Mammary epithelial cell (primary cell): ENCODE measurements at regions of chr9 and their contacts with region 1.

Region 1: GRCh38 chr9:132575005-132575609 is 7.3 kb upstream of the BARHL1 start:
- DNase-seq: peak; percentile 57
- H3K4me3 ChIP-seq: no peak overlapping the region
- H3K27ac ChIP-seq: no peak overlapping the region
- H3K4me1 ChIP-seq: no peaks in the 10 kb centered on the region
- H3K27me3 ChIP-seq: peaks cover 19% of the 10 kb centered on the region
- CTCF ChIP-seq: peak; percentile 65 to 83

Region 2: DNA sequence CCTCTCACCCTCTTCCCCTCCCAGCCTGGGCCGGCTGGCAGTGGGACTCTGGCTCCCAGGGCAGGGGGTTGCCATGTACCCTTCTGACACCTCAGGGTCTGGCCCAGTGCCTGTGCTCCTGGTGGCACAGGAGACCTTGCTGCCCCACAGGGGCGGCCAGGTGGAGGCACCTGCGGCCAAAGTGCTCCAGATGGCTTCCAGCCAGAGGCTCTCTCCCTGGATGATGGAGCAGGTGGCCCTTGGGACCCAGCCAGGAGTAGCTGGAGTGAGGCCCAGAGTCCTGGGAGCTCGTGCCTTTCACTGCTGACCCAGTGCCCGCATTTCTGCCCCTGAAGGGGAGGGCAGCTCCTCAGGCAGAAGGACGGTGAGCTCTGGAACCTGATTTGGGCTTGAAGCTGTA is 326.0 kb before region 1 on chr9:
- CTCF ChIA-PET with region 1: no interaction called
- dilution Hi-C with region 1: no loop called
- in situ Hi-C with region 1: no loop called
- intact Hi-C with region 1: loop called (anchors 10 kb)
- DNase-seq: no peak
- H3K4me3 ChIP-seq: no peak overlapping the region
- H3K27ac ChIP-seq: no peak overlapping the region
- H3K4me1 ChIP-seq: no peaks in the 10 kb centered on the region
- H3K27me3 ChIP-seq: no peaks in the 10 kb centered on the region
- CTCF ChIP-seq: no peak

Region 3: DNA sequence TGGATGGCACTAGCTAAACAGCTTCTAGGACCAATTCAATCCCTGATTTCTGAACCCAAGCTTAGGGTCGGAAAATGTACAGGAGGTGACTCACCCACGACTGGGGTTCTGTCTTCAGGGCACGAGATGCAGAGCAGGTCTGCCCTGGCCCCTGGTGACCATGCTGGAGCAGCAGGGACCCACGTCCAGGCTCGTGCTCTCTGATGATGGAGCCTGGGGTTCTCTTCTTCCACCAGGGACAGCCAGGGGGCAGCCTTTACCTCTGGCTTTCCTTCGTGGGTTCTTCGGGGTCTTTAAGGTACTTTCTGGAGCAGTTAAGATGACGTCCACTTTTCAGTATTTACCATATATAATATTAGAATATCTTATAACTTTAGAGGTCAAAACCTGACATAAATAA is 163.0 kb before region 1 on chr9:
- CTCF ChIA-PET with region 1: no interaction called
- dilution Hi-C with region 1: no loop called
- in situ Hi-C with region 1: loop called in 1 of 2 experiments (anchors 10 kb)
- intact Hi-C with region 1: loop called (anchors 1 kb)
- DNase-seq: peak; percentile 9
- H3K4me3 ChIP-seq: no peak overlapping the region
- H3K27ac ChIP-seq: no peak overlapping the region
- H3K4me1 ChIP-seq: peaks cover 22% of the 10 kb centered on the region
- H3K27me3 ChIP-seq: peaks cover 3% of the 10 kb centered on the region
- CTCF ChIP-seq: peak; percentile 46 to 62

Region 4: DNA sequence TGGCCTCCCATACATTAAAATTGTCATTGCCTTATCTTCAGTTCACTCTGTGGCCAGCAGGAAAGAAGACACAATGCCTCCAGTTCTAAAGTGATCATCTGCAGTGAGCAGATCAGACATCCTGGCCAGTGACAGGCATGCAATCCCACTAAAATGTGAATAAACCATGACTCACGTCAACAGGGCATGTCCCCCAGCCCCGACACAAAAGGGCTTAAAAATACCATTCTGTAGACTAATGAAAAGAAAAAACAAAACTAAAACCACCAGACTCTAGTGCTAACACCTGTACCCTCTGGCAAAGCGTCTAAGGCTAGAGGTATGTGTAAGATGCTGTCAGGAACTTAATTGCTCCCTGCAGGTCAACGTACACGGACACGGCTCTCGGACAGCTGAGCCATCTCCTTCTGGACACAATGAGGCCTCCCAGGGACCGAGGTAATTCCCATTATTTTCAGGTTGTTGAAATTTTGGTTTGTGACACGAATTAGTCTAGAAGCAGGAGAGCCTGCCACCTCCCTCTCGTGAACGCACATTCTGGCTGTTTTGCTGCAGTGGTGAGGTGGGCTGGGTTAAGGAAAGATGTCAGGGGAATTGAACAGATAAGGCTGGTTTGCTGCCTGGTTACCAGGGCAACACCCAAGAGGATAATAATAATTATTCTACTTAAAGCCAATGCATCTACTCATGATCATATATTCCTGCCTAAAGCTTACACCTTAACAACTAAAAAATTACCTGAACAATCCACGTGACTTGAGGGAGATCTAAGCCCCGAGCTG is 56.4 kb after region 1 on chr9:
- CTCF ChIA-PET with region 1: no interaction called
- dilution Hi-C with region 1: no loop called
- in situ Hi-C with region 1: no loop called
- intact Hi-C with region 1: no loop called
- DNase-seq: peak; percentile 94
- H3K4me3 ChIP-seq: peak overlapping the region in 1 of 3 experiments; percentile 33
- H3K27ac ChIP-seq: peak overlapping the region; percentile 86
- H3K4me1 ChIP-seq: peaks cover 35% of the 10 kb centered on the region
- H3K27me3 ChIP-seq: no peaks in the 10 kb centered on the region
- CTCF ChIP-seq: peak; percentile 12 to 33